ENCODE measurements at regions of chr19 and their contacts with region 1.

Region 1: DNA sequence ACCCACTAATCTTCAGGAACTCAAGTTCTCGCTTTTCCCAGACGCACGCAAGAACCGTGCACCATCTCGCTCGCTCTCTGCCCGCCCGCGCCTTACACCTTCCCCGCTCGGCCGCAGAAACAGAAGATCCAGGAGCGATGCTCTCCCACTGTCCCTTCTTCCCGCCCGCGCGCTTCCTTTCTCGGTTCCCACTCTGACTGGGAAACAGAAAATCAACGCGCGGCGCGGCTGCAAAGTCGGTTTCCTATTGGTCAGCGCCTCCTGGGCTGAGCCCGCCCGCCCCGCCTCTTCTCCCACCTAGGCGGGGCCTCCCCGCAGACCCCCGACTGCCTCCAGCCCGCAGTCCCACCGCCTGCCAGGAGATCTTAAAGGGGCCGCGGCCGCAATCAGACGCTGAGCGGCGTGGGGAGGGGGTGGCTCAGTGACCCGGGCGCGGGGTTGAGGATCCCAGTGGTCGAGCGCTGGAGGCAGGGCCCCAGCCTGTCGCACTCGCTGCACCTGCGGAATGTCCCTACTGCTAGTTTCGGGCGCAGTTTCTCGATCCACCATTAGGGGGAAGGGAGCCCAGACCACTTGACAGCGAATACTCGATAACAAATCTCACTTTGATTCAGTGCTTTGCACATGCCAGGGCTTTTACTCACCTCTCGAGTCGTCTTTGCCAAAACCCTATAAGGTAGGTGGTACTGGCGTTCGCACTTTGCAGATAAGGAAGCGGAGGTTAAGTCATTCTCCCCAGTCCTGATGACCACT is 685 bp upstream of the SLC25A23 start:
- DNase-seq: peak; percentile 89
- ATAC-seq: peak; percentile 84
- H3K4me3 ChIP-seq: peak overlapping the region; percentile 80
- H3K27ac ChIP-seq: peak overlapping the region; percentile 94
- H3K4me1 ChIP-seq: peaks cover 10% of the 10 kb centered on the region
- H3K27me3 ChIP-seq: no peaks in the 10 kb centered on the region
- CTCF ChIP-seq: peak; percentile 57 to 67 (median 66)
- EP300 ChIP-seq: no peak
- POLR2A ChIP-seq: peak; percentile 82
- RAD21 ChIP-seq: peak; percentile 31

Region 2: GRCh38 chr19:6238643-6239281 is 221.5 kb before region 1 on chr19:
- CTCF ChIA-PET with region 1: no interaction called
- POLR2A ChIA-PET with region 1: no interaction called
- RAD21 ChIA-PET with region 1: no interaction called
- SMC1A ChIA-PET with region 1: no interaction called
- in situ Hi-C with region 1: no loop called
- intact Hi-C with region 1: no loop called
- DNase-seq: no peak
- ATAC-seq: no peak
- H3K4me3 ChIP-seq: no peak overlapping the region
- H3K27ac ChIP-seq: no peak overlapping the region
- H3K4me1 ChIP-seq: peaks cover 4% of the 10 kb centered on the region
- H3K27me3 ChIP-seq: no peaks in the 10 kb centered on the region
- CTCF ChIP-seq: no peak
- EP300 ChIP-seq: no peak
- POLR2A ChIP-seq: no peak
- RAD21 ChIP-seq: no peak

Region 3: DNA sequence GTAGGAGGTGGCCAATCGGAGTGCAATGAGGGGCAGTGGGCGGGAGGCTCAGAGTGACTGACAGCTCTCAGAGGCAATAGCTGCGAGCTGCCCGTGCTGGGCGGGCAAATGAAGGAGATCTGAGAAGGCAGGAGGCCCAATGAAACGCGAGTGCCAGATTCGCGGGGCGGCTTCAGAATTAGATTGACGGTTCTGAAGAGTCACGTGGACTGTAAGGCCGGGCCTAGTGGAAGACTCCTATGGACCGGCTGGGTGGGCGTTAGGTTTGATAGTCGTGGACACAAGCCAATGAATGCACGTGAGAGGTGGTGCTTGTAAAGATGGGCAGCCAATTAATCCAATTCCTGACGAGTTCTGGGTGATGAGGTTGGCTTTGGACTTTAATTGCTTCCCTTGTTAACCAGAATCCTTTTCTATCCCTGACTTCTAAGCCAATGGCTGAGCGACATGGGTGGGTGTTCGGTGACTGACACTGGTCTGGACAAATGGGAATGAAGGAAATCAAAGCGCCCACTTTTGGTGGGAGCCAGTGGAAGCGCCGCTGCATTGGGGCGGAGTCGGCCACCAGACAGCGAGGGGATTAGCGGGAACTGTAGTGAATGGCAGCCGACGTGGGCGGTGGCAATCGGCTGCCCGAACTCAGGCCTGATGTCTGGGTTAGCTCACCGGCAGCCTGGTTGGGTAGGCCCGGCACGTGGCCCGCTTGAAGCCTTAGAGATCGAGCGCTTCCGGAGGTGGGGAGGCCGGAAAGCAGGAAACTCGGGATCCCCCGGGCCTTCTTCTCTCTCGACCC is 35.1 kb before region 1 on chr19:
- CTCF ChIA-PET with region 1: interaction called, 3 read pairs
- POLR2A ChIA-PET with region 1: interaction called, 8 read pairs
- RAD21 ChIA-PET with region 1: interaction called, 7 read pairs
- SMC1A ChIA-PET with region 1: no interaction called
- in situ Hi-C with region 1: no loop called
- intact Hi-C with region 1: loop called (anchors 1 kb)
- DNase-seq: peak; percentile 100
- ATAC-seq: peak; percentile 93
- H3K4me3 ChIP-seq: peak overlapping the region; percentile 6; the same call in 1 of the 2 replicates
- H3K27ac ChIP-seq: peak overlapping the region; percentile 58
- H3K4me1 ChIP-seq: peaks cover 5% of the 10 kb centered on the region
- H3K27me3 ChIP-seq: no peaks in the 10 kb centered on the region
- CTCF ChIP-seq: no peak
- EP300 ChIP-seq: no peak
- POLR2A ChIP-seq: peak; percentile 76
- RAD21 ChIP-seq: no peak

Region 4: GRCh38 chr19:6481541-6482342 is 21.5 kb after region 1 on chr19 and contains the start of gene DENND1C:
- CTCF ChIA-PET with region 1: interaction called, 7 read pairs
- POLR2A ChIA-PET with region 1: interaction called, 10 read pairs
- RAD21 ChIA-PET with region 1: interaction called, 11 read pairs
- SMC1A ChIA-PET with region 1: no interaction called
- in situ Hi-C with region 1: no loop called
- intact Hi-C with region 1: no loop called
- DNase-seq: peak; percentile 45
- ATAC-seq: peak; percentile 95
- H3K4me3 ChIP-seq: peak within 1 kb of the TSS; percentile 69
- H3K27ac ChIP-seq: peak within 1 kb of the TSS; percentile 93
- H3K4me1 ChIP-seq: peaks cover 10% of the 10 kb centered on the region
- H3K27me3 ChIP-seq: no peaks in the 10 kb centered on the region
- CTCF ChIP-seq: peak; percentile 51 to 64 (median 61); a peak in 4 of 6 replicates
- EP300 ChIP-seq: no peak
- POLR2A ChIP-seq: peak; percentile 82
- RAD21 ChIP-seq: peak; percentile 53
- polyA plus RNA-seq, gene DENND1C: 2.4 to 2.8 TPM

Region 5: GRCh38 chr19:6540918-6541689 is 80.8 kb after region 1 on chr19:
- CTCF ChIA-PET with region 1: no interaction called
- POLR2A ChIA-PET with region 1: no interaction called
- RAD21 ChIA-PET with region 1: no interaction called
- SMC1A ChIA-PET with region 1: no interaction called
- in situ Hi-C with region 1: no loop called
- intact Hi-C with region 1: no loop called
- DNase-seq: no peak
- ATAC-seq: no peak
- H3K4me3 ChIP-seq: no peak overlapping the region
- H3K27ac ChIP-seq: no peak overlapping the region
- H3K4me1 ChIP-seq: peaks cover 40% of the 10 kb centered on the region
- H3K27me3 ChIP-seq: no peaks in the 10 kb centered on the region
- CTCF ChIP-seq: no peak
- EP300 ChIP-seq: no peak
- POLR2A ChIP-seq: no peak; the same call in 1 of the 2 replicates
- RAD21 ChIP-seq: no peak